ENCODE measurements at regions of chr1 and their contacts with region 1.

Region 1: DNA sequence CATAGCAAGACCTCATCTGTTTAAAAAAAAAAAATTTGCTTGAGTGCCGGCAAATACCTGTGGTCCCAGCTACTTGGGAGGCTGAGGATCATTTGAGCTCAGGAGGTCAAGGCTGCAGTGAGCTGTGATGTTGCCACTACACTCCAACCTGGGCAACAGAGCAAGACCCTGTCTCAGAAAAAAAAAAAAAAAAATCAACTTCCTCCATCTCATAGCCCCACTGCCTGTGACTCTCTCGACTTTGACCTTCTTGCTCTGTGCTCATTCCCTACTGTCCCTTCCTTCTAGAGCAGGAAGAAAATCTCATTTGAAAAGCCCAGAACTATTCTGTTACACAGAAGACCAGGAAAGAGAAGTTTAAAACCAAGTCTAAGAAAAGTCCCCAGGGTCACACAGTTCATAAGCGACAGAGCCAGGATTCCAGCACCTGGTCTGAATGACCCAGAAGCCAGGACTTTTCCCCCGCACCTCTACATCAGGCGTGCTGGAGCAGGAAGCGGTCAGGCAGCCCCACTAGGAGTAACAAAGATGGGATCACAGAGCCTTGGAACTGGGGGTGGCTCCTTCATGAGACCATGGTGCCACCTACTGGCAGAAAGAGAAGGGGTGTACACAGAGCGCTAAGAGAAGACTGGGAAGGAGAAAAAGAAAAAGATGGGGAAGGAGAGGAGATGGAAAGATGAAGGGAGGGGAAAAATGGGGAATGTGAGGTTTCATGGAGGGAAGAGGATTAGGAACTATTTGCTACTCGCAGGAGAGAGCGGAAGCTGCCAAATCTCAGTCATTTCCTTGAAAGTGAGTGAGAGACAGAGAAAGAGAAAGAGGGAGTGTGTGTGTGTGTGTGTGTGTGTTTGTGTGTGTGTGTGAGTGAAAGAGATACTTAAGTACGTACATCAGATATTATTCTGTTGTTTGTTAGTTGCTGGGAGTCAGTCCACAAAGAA is 3.1 kb upstream of the P3R3URF start:
- DNase-seq: peak; percentile 68 to 79
- ATAC-seq: peak; percentile 51 to 62
- H3K4me3 ChIP-seq: no peak overlapping the region
- H3K27ac ChIP-seq: peak overlapping the region in 3 of 4 donors; percentile 46 to 64 (median 53)
- H3K4me1 ChIP-seq: peaks cover 29 to 35% of the 10 kb centered on the region in 2 donors
- H3K27me3 ChIP-seq: no peaks in the 10 kb centered on the region
- CTCF ChIP-seq: peak; percentile 85 to 96 (median 89)
- POLR2A ChIP-seq: no peak

Region 2: DNA sequence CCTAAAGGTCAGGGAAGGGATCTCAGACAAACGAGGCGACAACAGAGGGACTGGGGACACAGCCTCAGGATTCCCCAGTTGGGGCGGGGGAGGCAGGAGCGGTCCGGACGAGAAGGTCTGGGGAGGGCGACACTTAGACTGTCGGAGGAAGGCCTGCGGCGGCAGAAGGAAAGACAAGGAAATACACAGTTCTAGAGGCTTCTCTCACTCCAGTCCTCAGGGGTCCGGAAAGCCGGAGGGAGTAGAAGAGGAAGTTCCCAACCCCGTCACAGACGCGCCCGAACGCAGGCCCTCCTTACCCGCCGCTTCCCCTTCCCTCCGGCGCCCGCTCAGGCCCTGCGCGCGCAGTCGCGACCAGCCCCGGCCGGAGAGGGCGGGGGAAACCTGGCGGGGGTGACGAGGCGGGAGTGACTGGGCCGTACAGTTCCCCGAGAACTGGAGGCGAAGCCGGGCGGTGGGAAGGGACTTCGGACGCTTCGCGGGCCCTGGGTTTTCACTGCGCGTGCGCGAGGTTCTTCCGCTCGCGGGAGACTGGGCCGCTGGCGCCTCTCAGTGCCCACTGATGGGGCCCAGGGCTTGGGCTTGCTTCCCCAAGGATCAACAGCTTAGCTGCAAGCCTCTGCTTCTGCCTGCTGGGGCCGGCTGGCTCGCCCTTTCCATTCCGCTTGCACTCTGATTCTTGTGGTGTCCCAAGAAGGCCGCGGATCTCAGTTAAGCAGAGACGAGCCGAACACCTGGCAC is 428.9 kb before region 1 on chr1 and contains the start of gene IPP:
- in situ Hi-C with region 1: no loop called
- intact Hi-C with region 1: loop called (anchors 10 kb)
- DNase-seq: peak; percentile 95 to 97
- ATAC-seq: peak; percentile 91 to 93
- H3K4me3 ChIP-seq: peak within 1 kb of the TSS; percentile 65 to 92 (median 72)
- H3K27ac ChIP-seq: peak within 1 kb of the TSS; percentile 93 to 100 (median 94)
- H3K4me1 ChIP-seq: peaks cover 11% of the 10 kb centered on the region in 2 donors
- H3K27me3 ChIP-seq: no peaks in the 10 kb centered on the region
- CTCF ChIP-seq: peak in 2 of 5 experiments; percentile 17 to 29
- POLR2A ChIP-seq: peak; percentile 93 to 95
- total RNA-seq, gene IPP: 5.6 to 11.7 (median 7.1) TPM

Region 3: GRCh38 chr1:45884700-45885099 is 294.7 kb before region 1 on chr1:
- in situ Hi-C with region 1: no loop called
- intact Hi-C with region 1: loop called (anchors 10 kb)
- DNase-seq: no peak
- ATAC-seq: peak; percentile 50 to 81
- H3K4me3 ChIP-seq: no peak overlapping the region
- H3K27ac ChIP-seq: peak overlapping the region; percentile 37 to 74 (median 56)
- H3K4me1 ChIP-seq: peaks cover 14 to 37% of the 10 kb centered on the region in 2 donors
- H3K27me3 ChIP-seq: no peaks in the 10 kb centered on the region
- CTCF ChIP-seq: no peak
- POLR2A ChIP-seq: no peak

Region 4: GRCh38 chr1:45913183-45913683 is 266.2 kb before region 1 on chr1:
- in situ Hi-C with region 1: no loop called
- intact Hi-C with region 1: loop called (anchors 10 kb)
- DNase-seq: peak; percentile 88 to 93
- ATAC-seq: peak; percentile 90 to 93
- H3K4me3 ChIP-seq: peak overlapping the region; percentile 55 to 64 (median 58)
- H3K27ac ChIP-seq: peak overlapping the region; percentile 91 to 97 (median 92)
- H3K4me1 ChIP-seq: peaks cover 36 to 39% of the 10 kb centered on the region in 2 donors
- H3K27me3 ChIP-seq: no peaks in the 10 kb centered on the region
- CTCF ChIP-seq: no peak
- POLR2A ChIP-seq: peak; percentile 84 to 89

Region 5: DNA sequence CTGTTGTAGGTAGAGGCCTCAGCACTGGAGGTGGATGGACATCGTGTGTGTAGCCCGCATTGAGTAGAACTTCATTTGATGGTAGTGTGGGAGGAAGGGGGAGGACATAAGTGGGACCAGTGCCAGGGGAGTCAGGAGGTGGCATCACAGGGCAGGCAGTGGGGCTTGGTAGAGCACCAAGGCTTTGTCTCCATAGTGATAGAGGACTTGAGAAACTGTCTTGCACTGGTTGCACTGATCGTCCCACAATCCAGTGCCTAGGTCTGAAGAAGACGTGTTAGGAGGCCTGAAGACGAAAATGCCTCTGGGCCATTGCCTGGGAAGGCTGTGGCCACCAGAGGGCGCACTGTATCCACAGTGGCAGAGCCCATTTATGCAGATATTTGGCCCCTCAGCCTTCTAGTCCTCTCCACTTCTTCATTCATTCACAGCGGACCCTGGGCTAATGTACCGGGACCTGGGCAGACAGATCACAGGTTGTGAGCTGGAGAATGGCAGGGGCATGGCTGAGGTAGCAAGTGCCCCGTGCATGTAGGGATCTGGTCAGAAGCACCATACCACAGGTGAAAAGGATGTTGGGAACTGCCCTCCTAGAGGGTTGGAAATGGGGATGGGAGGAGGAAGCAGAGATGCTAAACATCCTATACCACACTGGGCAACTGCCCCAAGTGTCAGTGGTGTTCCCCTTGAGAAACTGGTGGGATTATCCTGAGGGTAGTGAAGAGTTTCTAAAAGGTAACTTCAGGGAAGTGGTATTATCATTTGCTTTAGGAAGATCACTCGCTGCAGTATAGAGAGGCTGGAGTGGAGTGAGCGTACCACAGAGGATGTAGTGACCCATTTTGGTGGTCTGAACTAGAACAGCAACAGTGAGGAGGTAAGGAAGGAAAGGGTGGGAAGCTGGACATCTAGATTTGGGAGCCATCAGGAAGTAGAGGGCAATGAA is 142.2 kb before region 1 on chr1:
- in situ Hi-C with region 1: loop called (anchors 5 kb)
- intact Hi-C with region 1: loop called (anchors 1 kb)
- DNase-seq: peak; percentile 62 to 85
- ATAC-seq: peak; percentile 60 to 63
- H3K4me3 ChIP-seq: no peak overlapping the region
- H3K27ac ChIP-seq: peak overlapping the region; percentile 62 to 79 (median 74)
- H3K4me1 ChIP-seq: peaks cover 40 to 53% of the 10 kb centered on the region in 2 donors
- H3K27me3 ChIP-seq: no peaks in the 10 kb centered on the region
- CTCF ChIP-seq: peak; percentile 95 to 97 (median 97)
- POLR2A ChIP-seq: no peak

Region 6: DNA sequence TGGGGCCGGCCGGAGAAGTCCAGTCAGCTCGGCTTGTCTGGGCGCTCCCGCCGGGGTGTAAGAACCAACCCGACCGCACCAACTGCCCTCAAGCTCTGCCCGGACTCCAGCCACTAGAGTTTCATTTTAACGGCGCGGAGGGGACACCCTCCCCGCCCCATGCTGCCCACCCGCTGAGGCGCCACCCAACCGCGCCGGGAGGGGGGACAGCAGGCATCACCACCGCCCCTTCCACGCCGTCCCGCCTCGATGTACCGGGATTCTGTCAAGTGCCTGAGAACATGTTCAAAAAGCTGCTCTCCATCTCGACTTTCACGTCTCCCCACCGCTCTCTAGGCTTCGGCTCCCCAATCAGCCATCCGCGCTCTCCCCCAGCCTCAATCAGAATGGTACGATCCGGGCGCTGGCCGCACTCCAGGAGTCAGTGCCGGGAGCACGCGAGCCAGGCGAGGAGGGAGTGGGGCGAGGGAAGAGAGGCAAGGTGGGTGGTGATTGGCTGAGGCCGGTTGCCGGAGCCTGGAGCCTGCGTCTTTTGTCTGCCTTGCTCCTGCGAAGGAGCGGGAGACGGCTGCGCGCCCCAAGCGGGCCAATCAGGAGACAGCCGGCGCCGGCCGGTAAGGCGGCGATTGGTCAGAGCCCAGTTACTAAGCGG is 46.8 kb before region 1 on chr1 and contains the start of gene PIK3R3:
- in situ Hi-C with region 1: no loop called
- intact Hi-C with region 1: loop called (anchors 2 kb)
- DNase-seq: peak; percentile 98
- ATAC-seq: peak; percentile 82 to 84
- H3K4me3 ChIP-seq: peak within 1 kb of the TSS; percentile 76 to 95 (median 84)
- H3K27ac ChIP-seq: peak within 1 kb of the TSS; percentile 96 to 99 (median 98)
- H3K4me1 ChIP-seq: peaks cover 39 to 44% of the 10 kb centered on the region in 2 donors
- H3K27me3 ChIP-seq: peaks cover 0 to 10% (median 6%) of the 10 kb centered on the region in 3 donors
- CTCF ChIP-seq: peak in 2 of 5 experiments; percentile 18 to 24
- POLR2A ChIP-seq: peak; percentile 95 to 98
- total RNA-seq, gene PIK3R3: 12.1 to 23.8 (median 15.9) TPM

Region 7: GRCh38 chr1:46197964-46198811 is 18.8 kb after region 1 on chr1 and contains the start of gene POMGNT1:
- in situ Hi-C with region 1: no loop called
- intact Hi-C with region 1: loop called (anchors 1 kb)
- DNase-seq: peak; percentile 22 to 56
- ATAC-seq: peak; percentile 89 to 91
- H3K4me3 ChIP-seq: peak within 1 kb of the TSS; percentile 63 to 86 (median 79)
- H3K27ac ChIP-seq: peak within 1 kb of the TSS; percentile 82 to 97 (median 88)
- H3K4me1 ChIP-seq: peaks cover 21 to 30% of the 10 kb centered on the region in 2 donors
- H3K27me3 ChIP-seq: no peaks in the 10 kb centered on the region
- CTCF ChIP-seq: peak in 2 of 5 experiments; percentile 21 to 24
- POLR2A ChIP-seq: peak; percentile 63 to 64
- total RNA-seq, gene POMGNT1: 66.2 to 107 (median 92.2) TPM